ENCODE measurements at regions of chr4 and their contacts with region 1.

Region 1: DNA sequence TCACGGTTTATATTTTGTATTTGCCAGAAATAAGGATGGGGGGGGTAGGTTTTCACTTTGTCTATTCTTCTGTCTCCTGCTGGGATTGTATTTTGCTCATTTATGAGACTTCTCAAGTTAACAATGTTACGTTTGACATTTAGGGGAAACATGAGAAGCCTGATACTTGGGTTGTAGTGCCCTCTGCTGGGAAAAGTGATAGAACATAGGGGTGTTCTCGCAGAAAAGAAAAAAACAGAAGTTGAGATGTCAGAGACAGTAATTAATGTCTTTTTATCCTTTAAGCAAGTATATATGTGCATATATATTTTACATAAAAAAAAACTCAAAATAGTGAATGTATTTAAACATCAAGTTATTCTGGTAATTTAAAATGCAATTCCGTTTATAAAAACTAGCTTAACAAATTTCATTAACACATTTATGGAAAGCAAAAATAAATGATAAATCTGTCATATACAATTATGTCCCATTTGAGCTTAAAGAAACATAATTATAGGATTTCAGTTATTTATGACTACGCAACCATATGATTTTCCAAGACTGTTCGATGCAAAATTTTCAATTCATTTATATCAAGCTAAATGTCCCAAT is 46.0 kb upstream of the TMPRSS11F start:
- DNase-seq: peak; percentile 54
- ATAC-seq: peak; percentile 73; the same call in 1 of the 2 replicates
- H3K4me3 ChIP-seq: no peak overlapping the region
- H3K27ac ChIP-seq: no peak overlapping the region
- H3K4me1 ChIP-seq: peaks cover 0 to under 1% of the 10 kb centered on the region in 2 experiments; a peak in 1 of 4 replicates
- H3K27me3 ChIP-seq: no peaks in the 10 kb centered on the region
- CTCF ChIP-seq: peak; percentile 61 to 85 (median 76); a peak in 5 of 6 replicates
- POLR2A ChIP-seq: no peak
- RAD21 ChIP-seq: peak; percentile 91

Region 2: DNA sequence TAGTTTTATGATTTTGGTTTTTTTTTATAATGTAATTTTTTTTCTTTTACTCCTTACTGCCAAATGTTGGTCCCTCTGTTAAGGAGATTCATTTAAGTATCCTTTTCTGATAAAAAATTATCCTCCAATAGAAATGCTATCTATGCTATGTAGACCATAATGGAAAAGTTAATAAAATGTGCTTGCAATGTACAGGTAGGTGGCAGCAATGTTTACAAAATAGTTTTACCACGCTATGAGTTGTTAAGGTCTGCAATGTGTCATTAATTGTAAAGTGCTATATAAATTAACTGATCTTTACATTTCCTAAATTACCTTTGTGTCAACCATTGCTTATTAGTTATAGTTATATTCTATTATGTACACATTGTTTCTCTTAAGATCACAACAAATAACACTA is 626.5 kb before region 1 on chr4:
- CTCF ChIA-PET with region 1: no interaction called
- POLR2A ChIA-PET with region 1: no interaction called
- RAD21 ChIA-PET with region 1: no interaction called
- intact Hi-C with region 1: loop called (anchors 2 kb)
- DNase-seq: no peak
- ATAC-seq: peak; percentile 21; the same call in 1 of the 2 replicates
- H3K4me3 ChIP-seq: no peak overlapping the region
- H3K27ac ChIP-seq: no peak overlapping the region
- H3K4me1 ChIP-seq: peaks cover 3 to 9% of the 10 kb centered on the region in 2 experiments; a peak in 3 of 4 replicates
- H3K27me3 ChIP-seq: no peaks in the 10 kb centered on the region
- CTCF ChIP-seq: peak; percentile 40 to 54 (median 48); a peak in 5 of 6 replicates
- POLR2A ChIP-seq: no peak
- RAD21 ChIP-seq: peak; percentile 72

Region 3: GRCh38 chr4:67587156-67587555 is 588.5 kb before region 1 on chr4:
- CTCF ChIA-PET with region 1: no interaction called
- POLR2A ChIA-PET with region 1: no interaction called
- RAD21 ChIA-PET with region 1: no interaction called
- intact Hi-C with region 1: no loop called
- DNase-seq: no peak
- ATAC-seq: no peak
- H3K4me3 ChIP-seq: no peak overlapping the region
- H3K27ac ChIP-seq: no peak overlapping the region
- H3K4me1 ChIP-seq: no peaks in the 10 kb centered on the region
- H3K27me3 ChIP-seq: no peaks in the 10 kb centered on the region
- CTCF ChIP-seq: no peak
- POLR2A ChIP-seq: no peak
- RAD21 ChIP-seq: no peak

Region 4: DNA sequence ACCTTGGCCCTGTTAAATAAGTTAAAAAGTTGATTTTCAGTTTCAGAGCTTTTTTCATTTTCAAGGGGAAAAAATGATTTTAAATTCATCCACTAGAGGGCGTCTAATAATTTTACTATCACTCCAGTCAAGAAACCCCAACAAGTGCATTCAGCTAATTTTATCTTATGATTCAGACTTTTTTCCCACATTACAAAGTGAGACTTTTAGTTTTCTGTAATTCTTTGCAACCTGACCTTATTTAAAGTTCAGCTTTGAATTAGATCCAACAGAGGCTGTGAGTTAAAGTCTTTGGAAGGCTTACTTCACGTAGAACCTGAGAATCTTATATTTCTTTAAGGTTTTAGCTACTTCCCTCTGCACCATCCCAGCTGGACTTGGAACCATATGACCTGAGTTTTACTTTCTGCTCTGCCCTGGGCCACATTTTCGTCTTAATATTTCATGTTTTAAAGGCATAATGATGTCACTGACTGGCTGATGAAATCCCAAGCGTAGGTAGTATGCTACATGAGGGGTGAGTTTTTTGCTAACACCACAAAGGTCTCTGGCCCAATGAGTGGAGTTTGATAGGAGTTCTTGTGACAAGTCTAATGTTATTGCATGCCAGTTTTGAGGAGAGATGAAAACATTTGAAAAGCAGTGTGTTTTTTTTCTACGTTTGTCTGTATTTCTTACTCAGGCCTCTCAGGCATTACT is 428.7 kb before region 1 on chr4:
- CTCF ChIA-PET with region 1: interaction called, 4 read pairs
- POLR2A ChIA-PET with region 1: no interaction called
- RAD21 ChIA-PET with region 1: no interaction called
- intact Hi-C with region 1: loop called (anchors 10 kb)
- DNase-seq: peak; percentile 37
- ATAC-seq: no peak
- H3K4me3 ChIP-seq: no peak overlapping the region
- H3K27ac ChIP-seq: no peak overlapping the region
- H3K4me1 ChIP-seq: no peaks in the 10 kb centered on the region
- H3K27me3 ChIP-seq: no peaks in the 10 kb centered on the region
- CTCF ChIP-seq: peak; percentile 30 to 59 (median 33); a peak in 5 of 6 replicates
- POLR2A ChIP-seq: no peak
- RAD21 ChIP-seq: peak; percentile 31; the same call in 1 of the 2 replicates

Region 5: DNA sequence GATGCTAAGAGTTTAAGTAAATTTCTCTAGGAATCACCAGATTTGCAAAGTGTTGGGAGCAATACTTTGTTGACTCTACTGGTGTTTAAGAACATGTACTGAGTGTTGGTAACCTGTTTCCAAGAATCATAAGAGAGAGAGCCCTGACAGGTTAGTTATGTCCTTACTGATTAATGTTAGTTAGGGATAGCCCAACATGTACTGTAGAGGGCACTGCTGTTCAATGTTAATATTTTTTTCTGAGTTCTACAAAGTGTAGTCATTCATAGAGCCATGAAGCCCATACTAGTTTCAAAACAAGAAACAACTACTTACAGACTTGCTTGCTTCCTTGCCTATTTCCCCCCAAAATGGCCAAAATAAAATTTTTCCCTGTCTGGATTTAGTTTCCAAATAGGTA is 303.8 kb before region 1 on chr4:
- CTCF ChIA-PET with region 1: no interaction called
- POLR2A ChIA-PET with region 1: no interaction called
- RAD21 ChIA-PET with region 1: no interaction called
- intact Hi-C with region 1: loop called (anchors 2 kb)
- DNase-seq: peak; percentile 37
- ATAC-seq: peak; percentile 92
- H3K4me3 ChIP-seq: no peak overlapping the region
- H3K27ac ChIP-seq: no peak overlapping the region
- H3K4me1 ChIP-seq: no peaks in the 10 kb centered on the region
- H3K27me3 ChIP-seq: no peaks in the 10 kb centered on the region
- CTCF ChIP-seq: peak; percentile 44 to 61 (median 47); a peak in 5 of 6 replicates
- POLR2A ChIP-seq: no peak
- RAD21 ChIP-seq: peak; percentile 56

Region 6: DNA sequence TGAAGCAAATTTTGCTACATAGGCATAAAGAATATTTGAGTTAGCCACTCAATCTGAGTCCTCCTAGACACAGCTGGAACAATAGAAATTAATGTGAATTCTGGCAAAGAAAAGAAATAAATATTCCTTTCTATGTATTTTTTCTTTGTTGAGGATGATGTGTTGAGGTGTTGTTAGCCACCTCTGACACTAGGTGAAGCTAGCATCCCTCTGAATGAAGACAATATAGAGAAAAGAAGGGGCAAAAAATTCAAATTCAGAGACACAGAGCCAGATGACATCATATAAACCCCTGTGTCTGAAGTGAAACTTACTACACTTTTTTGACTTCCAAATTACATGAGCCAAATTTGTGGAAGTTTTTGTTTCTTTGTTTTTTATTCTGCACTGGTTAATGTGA is 257.2 kb before region 1 on chr4:
- CTCF ChIA-PET with region 1: interaction called, 3 read pairs
- POLR2A ChIA-PET with region 1: no interaction called
- RAD21 ChIA-PET with region 1: no interaction called
- intact Hi-C with region 1: loop called (anchors 1 kb)
- DNase-seq: peak; percentile 13
- ATAC-seq: peak; percentile 72
- H3K4me3 ChIP-seq: no peak overlapping the region
- H3K27ac ChIP-seq: no peak overlapping the region
- H3K4me1 ChIP-seq: no peaks in the 10 kb centered on the region
- H3K27me3 ChIP-seq: no peaks in the 10 kb centered on the region
- CTCF ChIP-seq: peak; percentile 47 to 73 (median 51); a peak in 5 of 6 replicates
- POLR2A ChIP-seq: no peak
- RAD21 ChIP-seq: peak; percentile 73

Region 7: DNA sequence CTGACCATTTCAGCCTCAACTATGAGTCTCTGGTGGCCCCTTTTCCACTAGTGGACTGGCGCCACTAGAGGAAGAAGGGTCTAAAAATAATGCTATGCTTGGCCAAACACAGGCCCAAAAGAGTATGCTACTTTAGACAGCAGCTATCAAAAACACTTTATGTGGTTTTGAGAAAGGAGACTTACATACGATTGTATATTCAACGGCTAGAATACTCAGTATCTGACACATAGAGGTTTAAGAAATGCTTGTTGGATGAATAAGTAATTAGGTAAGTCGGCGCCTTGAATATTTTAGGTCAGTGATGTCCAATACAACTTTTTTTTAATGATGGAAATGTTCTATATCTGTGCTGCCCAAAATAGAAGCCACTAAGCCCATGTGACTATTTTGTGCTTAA is 186.7 kb before region 1 on chr4:
- CTCF ChIA-PET with region 1: interaction called, 9 read pairs
- POLR2A ChIA-PET with region 1: no interaction called
- RAD21 ChIA-PET with region 1: no interaction called
- intact Hi-C with region 1: loop called (anchors 1 kb)
- DNase-seq: no peak
- ATAC-seq: no peak
- H3K4me3 ChIP-seq: no peak overlapping the region
- H3K27ac ChIP-seq: no peak overlapping the region
- H3K4me1 ChIP-seq: no peaks in the 10 kb centered on the region
- H3K27me3 ChIP-seq: no peaks in the 10 kb centered on the region
- CTCF ChIP-seq: no peak
- POLR2A ChIP-seq: no peak
- RAD21 ChIP-seq: no peak

Region 8: DNA sequence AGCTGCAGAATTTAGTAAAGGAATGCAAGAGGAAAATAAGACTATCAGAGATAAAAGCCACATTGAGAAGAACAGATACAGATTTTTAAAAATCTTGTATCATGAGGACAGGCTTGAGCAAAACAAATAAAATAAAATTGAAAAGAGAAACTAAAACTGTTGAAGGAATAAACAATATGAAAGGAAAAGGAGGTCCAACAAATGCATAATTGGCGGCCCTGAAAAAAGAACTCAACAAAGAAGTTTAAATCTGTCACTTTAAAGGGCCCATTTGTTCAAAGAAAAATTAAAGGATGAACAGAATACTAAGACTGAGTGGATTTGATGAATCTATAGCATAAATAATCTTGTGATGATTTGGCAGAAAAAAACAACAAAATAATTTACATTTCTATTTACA is 33.3 kb after region 1 on chr4:
- CTCF ChIA-PET with region 1: no interaction called
- POLR2A ChIA-PET with region 1: no interaction called
- RAD21 ChIA-PET with region 1: no interaction called
- intact Hi-C with region 1: no loop called
- DNase-seq: peak; percentile 8
- ATAC-seq: no peak
- H3K4me3 ChIP-seq: no peak overlapping the region
- H3K27ac ChIP-seq: no peak overlapping the region
- H3K4me1 ChIP-seq: no peaks in the 10 kb centered on the region
- H3K27me3 ChIP-seq: no peaks in the 10 kb centered on the region
- CTCF ChIP-seq: no peak
- POLR2A ChIP-seq: no peak
- RAD21 ChIP-seq: no peak

Measured in HCT116 (cell line).